SK-N-SH (cell line): ENCODE measurements at regions of chr1 and their contacts with region 1.

Region 1: DNA sequence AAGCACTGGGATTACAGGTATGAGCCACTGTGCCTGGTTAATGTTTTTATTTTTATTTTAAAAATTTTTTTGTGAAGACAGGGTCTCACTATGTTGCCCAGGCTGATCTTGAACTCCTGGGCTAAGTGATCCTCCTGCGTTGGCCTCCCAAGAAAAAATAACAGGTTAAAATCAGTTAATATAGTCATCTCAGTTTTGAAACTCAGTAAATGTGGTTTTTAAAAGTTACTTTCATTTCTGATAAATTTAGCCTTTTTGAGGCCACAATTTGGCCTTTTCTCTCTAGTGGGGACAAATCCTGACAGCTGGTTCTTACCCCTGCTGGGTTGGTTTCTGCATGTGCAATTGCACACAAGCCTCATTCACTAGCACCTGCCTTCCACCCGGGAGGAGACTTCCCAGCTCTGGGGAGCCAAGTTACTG is 13.3 kb downstream of the PMF1 start:
- DNase-seq: no peak
- H3K4me3 ChIP-seq: no peak overlapping the region
- H3K27ac ChIP-seq: no peak overlapping the region
- H3K4me1 ChIP-seq: no peaks in the 10 kb centered on the region; a peak in 1 of 4 replicates
- H3K27me3 ChIP-seq: no peaks in the 10 kb centered on the region
- CTCF ChIP-seq: no peak
- EP300 ChIP-seq: no peak
- RAD21 ChIP-seq: no peak

Region 2: GRCh38 chr1:156096640-156097391 is 129.3 kb before region 1 on chr1:
- CTCF ChIA-PET with region 1: interaction called, 40 read pairs
- POLR2A ChIA-PET with region 1: interaction called, 3 read pairs
- DNase-seq: peak; percentile 89
- H3K4me3 ChIP-seq: no peak overlapping the region; a peak in 1 of 4 replicates
- H3K27ac ChIP-seq: peak overlapping the region; percentile 25 to 85; a peak in 3 of 4 replicates
- H3K4me1 ChIP-seq: peaks cover 13 to 23% of the 10 kb centered on the region in 2 experiments; a peak in 3 of 4 replicates
- H3K27me3 ChIP-seq: no peaks in the 10 kb centered on the region
- CTCF ChIP-seq: peak; percentile 96
- EP300 ChIP-seq: no peak
- RAD21 ChIP-seq: peak; percentile 96

Region 3: GRCh38 chr1:156136970-156137483 is 89.1 kb before region 1 on chr1:
- CTCF ChIA-PET with region 1: interaction called, 121 read pairs
- POLR2A ChIA-PET with region 1: no interaction called
- DNase-seq: no peak
- H3K4me3 ChIP-seq: no peak overlapping the region
- H3K27ac ChIP-seq: peak overlapping the region in 1 of 2 experiments; percentile 24; a peak in 1 of 4 replicates
- H3K4me1 ChIP-seq: no peaks in the 10 kb centered on the region
- H3K27me3 ChIP-seq: no peaks in the 10 kb centered on the region
- CTCF ChIP-seq: peak; percentile 39
- EP300 ChIP-seq: no peak
- RAD21 ChIP-seq: no peak

Region 4: DNA sequence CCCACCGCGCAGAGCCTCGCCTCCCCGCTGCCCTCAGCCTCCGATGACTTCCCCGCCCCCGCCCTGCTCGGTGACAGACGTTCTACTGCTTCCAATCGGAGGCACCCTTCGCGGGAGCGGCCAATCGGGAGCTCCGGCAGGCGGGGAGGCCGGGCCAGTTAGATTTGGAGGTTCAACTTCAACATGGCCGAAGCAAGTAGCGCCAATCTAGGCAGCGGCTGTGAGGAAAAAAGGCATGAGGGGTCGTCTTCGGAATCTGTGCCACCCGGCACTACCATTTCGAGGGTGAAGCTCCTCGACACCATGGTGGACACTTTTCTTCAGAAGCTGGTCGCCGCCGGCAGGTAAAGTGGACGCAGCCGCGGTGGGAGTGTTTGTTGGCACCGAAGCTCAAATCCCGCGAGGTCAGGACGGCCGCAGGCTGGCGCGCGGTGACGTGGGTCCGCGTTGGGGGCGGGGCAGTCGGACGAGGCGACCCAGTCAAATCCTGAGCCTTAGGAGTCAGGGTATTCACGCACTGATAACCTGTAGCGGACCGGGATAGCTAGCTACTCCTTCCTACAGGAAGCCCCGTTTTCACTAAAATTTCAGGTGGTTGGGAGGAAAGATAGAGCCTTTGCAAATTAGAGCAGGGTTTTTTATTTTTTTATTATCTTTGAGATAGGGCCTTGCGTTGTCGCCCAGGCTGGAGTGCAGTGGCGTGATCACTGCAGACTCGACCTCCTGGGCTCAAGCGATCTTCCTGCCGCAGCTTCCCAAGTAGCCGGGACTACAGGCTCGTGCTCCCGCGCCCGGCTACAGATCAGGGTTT is 13.1 kb before region 1 on chr1 and contains the start of gene PMF1:
- CTCF ChIA-PET with region 1: interaction called, 44 read pairs
- POLR2A ChIA-PET with region 1: interaction called, 7 read pairs
- DNase-seq: peak; percentile 98
- H3K4me3 ChIP-seq: peak within 1 kb of the TSS; percentile 67 to 70
- H3K27ac ChIP-seq: peak within 1 kb of the TSS; percentile 94 to 97
- H3K4me1 ChIP-seq: peaks cover 7 to 8% of the 10 kb centered on the region in 2 experiments; a peak in 2 of 4 replicates
- H3K27me3 ChIP-seq: no peaks in the 10 kb centered on the region
- CTCF ChIP-seq: no peak
- EP300 ChIP-seq: 0 out of 4 replicates have a peak, but pooled peaks of 1 of the 2 experiments have one; percentile 13
- RAD21 ChIP-seq: no peak
- polyA plus RNA-seq, gene PMF1: 72.5 and 89.5 TPM in 2 replicates

Region 5: DNA sequence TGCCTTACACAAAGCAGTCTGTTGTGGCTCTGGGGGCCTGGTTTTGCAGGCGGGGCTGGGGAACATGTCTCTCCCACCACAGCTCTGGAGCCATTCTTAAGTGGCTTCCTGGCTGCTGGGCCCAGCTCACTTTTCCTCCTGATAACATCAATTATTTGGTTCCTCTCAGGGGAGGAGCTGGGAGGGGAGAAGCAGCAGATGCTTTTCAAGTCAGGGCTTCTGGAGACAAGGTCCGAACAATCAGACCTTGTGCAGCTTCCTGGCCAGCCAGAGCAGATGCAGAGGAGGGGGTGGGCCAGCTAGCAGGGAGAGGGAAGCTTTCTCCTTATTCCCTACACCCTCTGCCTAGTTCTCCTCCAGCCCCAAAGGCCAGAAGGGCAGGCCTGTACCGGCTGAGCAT is 25.4 kb after region 1 on chr1:
- CTCF ChIA-PET with region 1: interaction called, 26 read pairs
- POLR2A ChIA-PET with region 1: no interaction called
- DNase-seq: peak; percentile 85
- H3K4me3 ChIP-seq: no peak overlapping the region
- H3K27ac ChIP-seq: peak overlapping the region; percentile 16 to 99; a peak in 3 of 4 replicates
- H3K4me1 ChIP-seq: peaks cover 13 to 65% of the 10 kb centered on the region in 2 experiments; a peak in 3 of 4 replicates
- H3K27me3 ChIP-seq: no peaks in the 10 kb centered on the region
- CTCF ChIP-seq: no peak
- EP300 ChIP-seq: peak in 1 of 2 experiments; percentile 87; a peak in 2 of 4 replicates
- RAD21 ChIP-seq: no peak; the same call in 1 of the 2 replicates

Region 6: DNA sequence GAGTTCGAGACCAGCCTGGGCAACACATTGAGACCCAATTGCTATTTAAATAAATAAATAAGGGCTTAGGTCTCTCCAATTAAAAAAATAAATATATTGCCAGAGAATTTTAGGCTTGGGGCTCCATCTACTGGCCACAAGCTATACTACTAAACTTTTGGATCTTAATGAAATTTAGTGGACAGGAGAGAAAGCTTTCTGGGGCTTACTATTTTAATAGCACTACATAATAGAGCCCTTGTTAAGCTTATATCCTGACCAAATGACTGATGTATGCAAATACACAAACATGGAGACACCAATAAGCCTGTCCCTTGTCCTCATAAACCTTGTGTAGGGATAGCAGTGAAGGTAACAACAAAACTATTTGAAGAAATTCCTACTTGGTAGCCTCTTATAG is 93.5 kb after region 1 on chr1:
- CTCF ChIA-PET with region 1: interaction called, 10 read pairs
- POLR2A ChIA-PET with region 1: no interaction called
- DNase-seq: peak; percentile 43
- H3K4me3 ChIP-seq: no peak overlapping the region
- H3K27ac ChIP-seq: 0 out of 4 replicates have a peak overlapping the region, but pooled peaks of 1 of the 2 experiments have one; percentile 16
- H3K4me1 ChIP-seq: no peaks in the 10 kb centered on the region
- H3K27me3 ChIP-seq: no peaks in the 10 kb centered on the region
- CTCF ChIP-seq: peak; percentile 79
- EP300 ChIP-seq: no peak
- RAD21 ChIP-seq: peak; percentile 64